H1 (cell line): ENCODE measurements at regions of chr2 and their contacts with region 1.

Region 1: DNA sequence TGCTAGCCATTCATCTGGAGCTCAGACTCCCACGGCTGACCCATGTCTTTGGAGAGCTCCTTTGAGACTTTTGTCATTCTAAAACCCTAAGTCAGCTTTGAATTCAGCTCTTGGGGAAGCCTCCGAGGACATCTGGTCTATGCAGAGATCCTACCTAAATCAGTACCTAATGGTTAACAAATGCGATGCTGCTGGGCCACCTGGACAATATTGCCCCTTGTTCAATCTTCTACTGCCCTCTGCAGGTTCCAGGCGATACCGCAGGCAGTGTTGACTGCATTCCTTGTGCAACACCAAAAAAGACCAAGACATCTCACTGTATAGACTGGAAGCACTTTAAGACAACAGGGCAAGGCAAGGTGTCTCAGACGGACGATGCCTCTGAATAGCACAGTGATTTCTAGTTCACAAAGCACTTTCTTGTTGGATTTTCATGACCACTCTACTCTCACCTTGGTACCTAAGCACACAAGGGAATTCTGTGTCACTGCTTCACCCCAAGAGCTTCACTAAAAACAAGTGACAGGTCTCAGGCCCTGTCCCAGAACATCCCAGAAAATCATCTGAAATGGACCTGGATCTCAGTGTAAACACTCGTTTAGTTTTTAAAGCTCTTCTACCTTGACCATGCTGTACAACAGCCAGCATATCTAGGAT is 80.9 kb downstream of the XDH start:
- DNase-seq: peak; percentile 71 to 92
- H3K4me3 ChIP-seq: no peak overlapping the region
- H3K27ac ChIP-seq: no peak overlapping the region
- H3K4me1 ChIP-seq: peaks cover 0 to 6% (median 0%) of the 10 kb centered on the region in 4 experiments; a peak in 2 of 7 replicates
- H3K27me3 ChIP-seq: no peaks in the 10 kb centered on the region; a peak in 1 of 7 replicates
- CTCF ChIP-seq: peak; percentile 85 to 98 (median 95)
- EP300 ChIP-seq: no peak
- POLR2A ChIP-seq: no peak
- RAD21 ChIP-seq: peak; percentile 98 to 99

Region 2: DNA sequence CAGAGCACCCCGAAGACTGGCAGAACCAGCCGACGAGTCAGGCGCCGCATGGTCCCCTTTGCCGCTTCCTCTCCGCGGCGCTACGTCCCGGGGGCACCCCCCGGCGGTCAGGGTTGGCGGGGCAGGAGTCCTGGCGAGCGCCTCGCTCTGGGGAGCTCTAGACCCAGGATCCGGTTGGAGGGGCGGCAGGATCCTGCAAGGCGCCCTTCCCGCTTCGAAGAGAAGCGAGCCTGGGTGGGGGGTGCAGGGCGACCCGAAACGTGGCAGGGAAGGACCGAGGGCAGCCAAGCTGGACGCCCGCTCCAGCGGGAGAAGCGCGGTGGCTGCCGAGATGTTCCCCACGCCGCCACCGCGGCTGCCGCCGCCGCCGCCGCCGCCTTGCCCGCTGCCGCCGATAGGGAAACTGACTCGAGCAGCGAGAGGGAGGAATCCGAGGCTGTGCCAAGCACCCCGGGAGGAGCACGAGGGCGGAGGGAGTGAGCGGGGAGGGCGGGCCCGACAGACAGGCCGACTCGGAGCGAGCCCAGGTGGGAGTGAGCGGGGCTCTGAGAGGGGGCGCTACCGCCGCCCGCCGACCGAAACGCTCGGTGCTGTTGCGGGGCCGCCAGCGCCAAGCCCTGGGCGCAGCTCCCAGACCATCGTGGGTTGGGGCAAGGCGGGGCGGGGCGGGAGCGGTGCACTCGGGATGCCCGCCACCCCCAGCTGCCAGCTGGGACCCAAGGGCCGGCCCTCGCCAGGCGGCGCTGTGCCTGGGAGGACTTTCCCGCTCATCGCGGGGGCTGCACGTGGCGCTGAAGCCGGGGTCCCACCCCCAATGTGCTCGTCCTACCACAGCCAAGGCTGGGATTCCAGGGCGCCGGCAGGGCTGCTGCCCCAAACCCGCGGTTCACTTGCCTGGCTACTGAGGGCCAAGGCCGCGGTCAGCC is 195.4 kb before region 1 on chr2 and contains the start of gene GALNT14:
- CTCF ChIA-PET with region 1: interaction called, 13 read pairs
- POLR2A ChIA-PET with region 1: no interaction called
- DNase-seq: peak; percentile 33 to 86
- H3K4me3 ChIP-seq: peak within 1 kb of the TSS; percentile 33 to 63 (median 43)
- H3K27ac ChIP-seq: no peak within 1 kb of the TSS
- H3K4me1 ChIP-seq: peaks cover 0 to 5% (median 5%) of the 10 kb centered on the region in 4 experiments; a peak in 4 of 7 replicates
- H3K27me3 ChIP-seq: peaks cover 13 to 50% (median 46%) of the 10 kb centered on the region in 4 experiments
- CTCF ChIP-seq: peak; percentile 41 to 57 (median 47)
- EP300 ChIP-seq: peak in 1 of 2 experiments; percentile 68; a peak in 1 of 3 replicates
- POLR2A ChIP-seq: no peak
- RAD21 ChIP-seq: peak; percentile 38 to 42
- total RNA-seq, gene GALNT14: 10.3 and 13.7 TPM in 2 replicates

Region 3: GRCh38 chr2:31192851-31193392 is 140.7 kb before region 1 on chr2:
- CTCF ChIA-PET with region 1: interaction called, 20 read pairs
- POLR2A ChIA-PET with region 1: no interaction called
- DNase-seq: peak in 1 of 2 experiments; percentile 47
- H3K4me3 ChIP-seq: no peak overlapping the region
- H3K27ac ChIP-seq: no peak overlapping the region
- H3K4me1 ChIP-seq: no peaks in the 10 kb centered on the region; a peak in 1 of 7 replicates
- H3K27me3 ChIP-seq: no peaks in the 10 kb centered on the region; a peak in 1 of 7 replicates
- CTCF ChIP-seq: peak in 2 of 3 experiments; percentile 58 to 60; a peak in 3 of 4 replicates
- EP300 ChIP-seq: no peak
- POLR2A ChIP-seq: no peak
- RAD21 ChIP-seq: peak; percentile 72 to 84

Region 4: GRCh38 chr2:31263636-31264200 is 69.9 kb before region 1 on chr2:
- CTCF ChIA-PET with region 1: interaction called, 11 read pairs
- POLR2A ChIA-PET with region 1: no interaction called
- DNase-seq: no peak
- H3K4me3 ChIP-seq: no peak overlapping the region
- H3K27ac ChIP-seq: no peak overlapping the region
- H3K4me1 ChIP-seq: peaks cover 0 to under 1% (median 0%) of the 10 kb centered on the region in 4 experiments; a peak in 1 of 7 replicates
- H3K27me3 ChIP-seq: no peaks in the 10 kb centered on the region
- CTCF ChIP-seq: no peak
- EP300 ChIP-seq: no peak
- POLR2A ChIP-seq: no peak
- RAD21 ChIP-seq: 0 out of 4 replicates have a peak, but pooled peaks of 1 of the 2 experiments have one; percentile 7

Region 5: DNA sequence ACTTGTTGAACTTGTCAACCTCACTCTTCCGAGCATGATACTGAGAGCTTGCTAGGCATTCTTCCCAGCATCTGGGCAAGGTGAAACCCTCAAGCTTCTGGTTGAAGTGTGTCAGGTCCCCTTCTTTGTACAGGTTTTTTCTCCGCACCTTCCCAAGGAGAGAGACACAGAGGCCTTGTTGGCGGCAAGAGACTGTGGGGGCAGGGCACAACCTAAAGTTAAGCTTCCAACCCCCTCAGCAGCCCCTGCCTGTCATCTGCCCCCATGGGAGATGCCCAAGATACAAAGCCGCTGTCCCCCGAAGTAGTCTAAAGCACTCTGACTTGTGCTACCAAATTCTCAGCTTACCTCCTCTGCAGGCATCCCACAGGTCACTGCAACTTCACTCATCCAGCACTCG is 16.0 kb after region 1 on chr2:
- CTCF ChIA-PET with region 1: interaction called, 14 read pairs
- POLR2A ChIA-PET with region 1: no interaction called
- DNase-seq: no peak
- H3K4me3 ChIP-seq: no peak overlapping the region
- H3K27ac ChIP-seq: no peak overlapping the region
- H3K4me1 ChIP-seq: no peaks in the 10 kb centered on the region
- H3K27me3 ChIP-seq: no peaks in the 10 kb centered on the region
- CTCF ChIP-seq: no peak
- EP300 ChIP-seq: no peak
- POLR2A ChIP-seq: no peak
- RAD21 ChIP-seq: no peak